Ascending aorta (tissue), 2 donors: ENCODE measurements at regions of chr1 and their contacts with region 1.

Region 1: GRCh38 chr1:11099310-11100149 is at the start of gene EXOSC10:
- DNase-seq: peak; percentile 54 to 96
- H3K4me3 ChIP-seq: peak within 1 kb of the TSS; percentile 85 to 89
- H3K27ac ChIP-seq: peak within 1 kb of the TSS; percentile 50 to 80
- H3K4me1 ChIP-seq: peaks cover 0 to 14% of the 10 kb centered on the region in 2 donors
- H3K27me3 ChIP-seq: no peaks in the 10 kb centered on the region
- CTCF ChIP-seq: no peak
- total RNA-seq, gene EXOSC10: 38.7 TPM

Region 2: DNA sequence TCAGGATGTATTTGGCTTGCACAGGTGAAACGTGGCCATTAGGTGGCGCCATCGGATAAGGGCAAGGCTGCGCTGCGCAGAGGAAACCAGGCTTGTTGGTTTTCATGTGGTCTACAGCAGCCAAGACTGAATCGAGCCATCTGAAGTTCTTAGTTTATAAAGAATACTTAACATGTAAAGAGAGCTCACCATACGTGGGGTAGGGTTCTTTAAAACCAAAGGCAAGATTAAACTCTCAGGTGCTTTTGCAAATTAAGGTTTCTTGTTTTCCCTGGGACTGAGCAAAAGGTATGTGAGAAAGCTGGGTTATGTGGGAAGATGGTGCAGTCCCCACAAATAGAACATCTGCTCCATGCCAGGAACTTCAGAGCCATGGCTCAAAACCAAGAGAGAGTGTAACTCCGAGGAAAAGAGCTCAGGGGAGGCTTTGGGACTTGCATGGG is 61.8 kb before region 1 on chr1:
- intact Hi-C with region 1: loop called (anchors 10 kb)
- DNase-seq: peak; percentile 37 to 93
- H3K4me3 ChIP-seq: no peak overlapping the region
- H3K27ac ChIP-seq: no peak overlapping the region
- H3K4me1 ChIP-seq: peaks cover 0 to 4% of the 10 kb centered on the region in 2 donors
- H3K27me3 ChIP-seq: no peaks in the 10 kb centered on the region
- CTCF ChIP-seq: peak; percentile 92 to 97 (median 95)

Region 3: GRCh38 chr1:11059990-11060830 is 39.3 kb before region 1 on chr1 and contains the start of gene SRM:
- intact Hi-C with region 1: loop called (anchors 1 kb)
- DNase-seq: peak; percentile 66 to 95
- H3K4me3 ChIP-seq: peak within 1 kb of the TSS; percentile 95 to 100
- H3K27ac ChIP-seq: peak within 1 kb of the TSS; percentile 52 to 66
- H3K4me1 ChIP-seq: peaks cover 11 to 16% of the 10 kb centered on the region in 2 donors
- H3K27me3 ChIP-seq: no peaks in the 10 kb centered on the region
- CTCF ChIP-seq: peak in 2 of 3 experiments; percentile 28 to 84
- total RNA-seq, gene SRM: 175 TPM

Region 4: DNA sequence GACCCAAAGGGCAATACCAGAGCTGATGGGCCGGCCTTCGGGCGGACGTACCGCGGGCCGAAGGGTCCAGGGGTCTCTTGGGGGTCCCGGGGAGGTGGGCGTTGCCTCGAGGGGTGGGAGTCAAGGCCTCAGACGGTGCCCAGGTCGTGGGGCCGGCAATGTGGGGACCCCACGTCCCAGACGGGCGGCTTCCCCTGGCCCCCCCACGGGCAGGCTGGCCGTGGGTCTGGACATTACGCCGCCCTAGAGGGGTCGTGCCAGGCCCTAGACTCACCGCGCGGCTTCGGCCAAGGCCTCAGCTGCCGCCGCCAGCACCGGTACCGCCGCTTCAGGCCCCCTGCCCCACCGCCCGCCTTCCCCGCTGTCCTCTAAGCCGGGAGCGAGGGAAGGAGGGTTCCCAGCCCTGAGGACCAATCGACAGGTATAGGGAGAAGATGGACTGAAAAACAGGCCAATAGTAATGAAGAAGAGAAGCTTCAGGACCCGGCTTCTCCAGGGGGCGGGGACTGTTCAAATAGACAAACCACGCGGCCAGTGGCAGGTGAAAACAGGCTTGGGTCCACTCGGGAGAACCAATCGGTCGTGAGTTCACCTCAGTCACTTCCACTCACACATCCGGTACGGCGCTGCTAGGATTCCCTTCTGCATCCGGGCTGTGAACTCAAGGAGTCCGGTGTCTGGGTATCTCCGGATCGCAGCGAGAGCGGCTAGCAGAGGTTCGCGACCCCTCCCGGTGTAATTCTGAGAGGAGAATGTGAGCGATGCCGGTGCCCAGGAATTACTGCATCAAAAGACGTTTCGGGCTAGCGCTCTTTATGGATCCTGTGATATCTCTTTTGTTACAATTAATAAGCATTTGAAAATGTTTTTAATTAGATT is 162.9 kb after region 1 on chr1 and contains the start of gene MTOR:
- intact Hi-C with region 1: loop called (anchors 2 kb)
- DNase-seq: peak; percentile 98 to 100
- H3K4me3 ChIP-seq: peak within 1 kb of the TSS; percentile 75 to 84
- H3K27ac ChIP-seq: peak within 1 kb of the TSS; percentile 59 to 67
- H3K4me1 ChIP-seq: peaks cover 5 to 11% of the 10 kb centered on the region in 2 donors
- H3K27me3 ChIP-seq: no peaks in the 10 kb centered on the region
- CTCF ChIP-seq: peak in 1 of 3 experiments; percentile 7
- total RNA-seq, gene MTOR: 28.0 TPM

Region 5: GRCh38 chr1:11272832-11273594 is 173.5 kb after region 1 on chr1 and contains the start of gene UBIAD1:
- intact Hi-C with region 1: loop called (anchors 1 kb)
- DNase-seq: peak; percentile 39 to 86
- H3K4me3 ChIP-seq: peak within 1 kb of the TSS; percentile 91 to 96
- H3K27ac ChIP-seq: peak within 1 kb of the TSS; percentile 79 to 93
- H3K4me1 ChIP-seq: peaks cover 0 to 29% of the 10 kb centered on the region in 2 donors
- H3K27me3 ChIP-seq: no peaks in the 10 kb centered on the region
- CTCF ChIP-seq: peak in 1 of 3 experiments; percentile 25
- total RNA-seq, gene UBIAD1: 53.0 TPM